ENCODE measurements at regions of chr17 and their contacts with region 1.

Region 1: GRCh38 chr17:40510328-40510648 is 8.9 kb upstream of the TNS4 start:
- DNase-seq: no peak
- ATAC-seq: peak; percentile 89
- H3K4me3 ChIP-seq: no peak overlapping the region
- H3K27ac ChIP-seq: no peak overlapping the region; the same call in 1 of the 2 replicates
- H3K4me1 ChIP-seq: peaks cover 8% of the 10 kb centered on the region
- H3K27me3 ChIP-seq: no peaks in the 10 kb centered on the region
- CTCF ChIP-seq: no peak

Region 2: DNA sequence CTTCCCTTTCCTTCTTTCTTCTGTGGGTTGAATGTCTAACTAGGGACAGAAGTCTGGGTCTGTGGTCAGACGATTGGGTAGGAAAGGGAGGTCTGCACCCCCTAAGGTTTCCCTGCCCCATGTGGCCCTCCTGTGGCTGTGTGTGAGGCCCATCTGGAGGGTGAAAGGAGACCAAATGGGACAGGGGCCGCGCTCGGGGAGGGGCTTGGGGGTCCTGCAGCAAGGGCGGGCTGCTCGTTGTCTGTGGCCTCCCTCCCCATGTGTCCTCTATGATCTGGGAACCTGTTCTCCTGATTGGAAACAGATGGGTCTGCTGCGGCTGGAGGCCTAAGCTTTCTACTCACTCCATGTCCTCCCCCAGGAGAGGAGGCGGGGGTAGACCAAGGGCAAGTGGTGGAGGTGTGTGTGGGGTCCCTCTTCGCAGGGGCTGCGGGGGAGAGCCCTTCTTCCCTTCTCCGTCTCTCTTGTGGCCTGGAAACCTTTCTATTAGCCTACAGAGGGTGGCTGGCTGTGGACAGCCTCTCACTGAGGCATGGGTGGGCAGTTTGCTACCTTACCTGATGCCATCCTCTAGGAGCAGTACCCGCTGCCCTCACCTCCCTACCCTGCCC is 48.5 kb before region 1 on chr17:
- CTCF ChIA-PET with region 1: no interaction called
- POLR2A ChIA-PET with region 1: no interaction called
- in situ Hi-C with region 1: no loop called
- intact Hi-C with region 1: no loop called
- DNase-seq: no peak
- ATAC-seq: no peak
- H3K4me3 ChIP-seq: no peak overlapping the region
- H3K27ac ChIP-seq: no peak overlapping the region
- H3K4me1 ChIP-seq: peaks cover 3% of the 10 kb centered on the region; the same call in 1 of the 2 replicates
- H3K27me3 ChIP-seq: no peaks in the 10 kb centered on the region
- CTCF ChIP-seq: no peak

Region 3: GRCh38 chr17:40480501-40481003 is 29.7 kb before region 1 on chr17:
- CTCF ChIA-PET with region 1: interaction called, 10 read pairs
- POLR2A ChIA-PET with region 1: no interaction called
- in situ Hi-C with region 1: no loop called
- intact Hi-C with region 1: no loop called
- DNase-seq: no peak
- ATAC-seq: no peak
- H3K4me3 ChIP-seq: no peak overlapping the region
- H3K27ac ChIP-seq: no peak overlapping the region
- H3K4me1 ChIP-seq: no peaks in the 10 kb centered on the region
- H3K27me3 ChIP-seq: no peaks in the 10 kb centered on the region
- CTCF ChIP-seq: no peak

Region 4: GRCh38 chr17:40542558-40543411 is 32.5 kb after region 1 on chr17:
- CTCF ChIA-PET with region 1: no interaction called
- POLR2A ChIA-PET with region 1: no interaction called
- in situ Hi-C with region 1: no loop called
- intact Hi-C with region 1: no loop called
- DNase-seq: no peak
- ATAC-seq: 0 out of 2 replicates have a peak, but pooled peaks have one; percentile 31
- H3K4me3 ChIP-seq: no peak overlapping the region
- H3K27ac ChIP-seq: no peak overlapping the region
- H3K4me1 ChIP-seq: no peaks in the 10 kb centered on the region
- H3K27me3 ChIP-seq: no peaks in the 10 kb centered on the region
- CTCF ChIP-seq: no peak